ENCODE measurements at regions of chr7 and their contacts with region 1.

Region 1: DNA sequence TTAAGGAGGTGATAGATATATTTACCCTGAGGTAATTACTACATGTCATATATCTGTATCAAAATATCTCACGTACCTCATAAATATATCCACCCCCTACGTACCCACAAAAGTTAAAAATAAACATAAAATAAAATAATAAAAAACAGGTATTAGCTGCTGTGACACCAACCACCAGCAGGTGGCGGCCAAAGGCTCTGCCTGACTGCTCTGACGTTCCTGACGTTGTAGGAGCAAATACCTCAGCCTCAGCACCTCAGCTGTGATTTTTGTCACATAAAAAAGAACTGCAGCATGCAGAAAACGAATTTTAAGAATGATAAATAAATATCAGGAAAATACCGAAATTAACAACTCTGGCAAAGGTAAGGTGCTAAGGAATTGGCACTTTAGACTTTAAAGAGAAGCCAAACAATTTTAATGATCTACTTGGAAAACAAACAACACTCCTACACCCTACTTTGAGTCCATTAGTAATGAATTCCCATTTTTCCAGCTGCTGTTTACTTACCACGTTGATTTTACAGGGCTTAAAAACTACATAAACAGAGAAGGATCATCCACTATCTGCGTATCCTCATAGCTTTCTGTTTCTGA is 125.4 kb upstream of the TARP start:
- DNase-seq: peak; percentile 66
- H3K4me3 Mint-ChIP-seq: no peak overlapping the region
- H3K27ac Mint-ChIP-seq: no peak overlapping the region
- H3K4me1 Mint-ChIP-seq: peaks cover 4% of the 10 kb centered on the region
- H3K27me3 Mint-ChIP-seq: peaks cover 15% of the 10 kb centered on the region

Region 2: GRCh38 chr7:38630720-38631673 is 232.2 kb after region 1 on chr7 and contains the start of gene AMPH:
- CTCF ChIA-PET with region 1: interaction called, 12 read pairs
- DNase-seq: peak; percentile 23
- H3K4me3 Mint-ChIP-seq: peak within 1 kb of the TSS; percentile 43
- H3K27ac Mint-ChIP-seq: no peak within 1 kb of the TSS
- H3K4me1 Mint-ChIP-seq: peaks cover 8% of the 10 kb centered on the region
- H3K27me3 Mint-ChIP-seq: peaks cover 57% of the 10 kb centered on the region

Region 3: GRCh38 chr7:38660427-38661099 is 261.7 kb after region 1 on chr7:
- CTCF ChIA-PET with region 1: interaction called, 31 read pairs
- DNase-seq: peak; percentile 38
- H3K4me3 Mint-ChIP-seq: no peak overlapping the region
- H3K27ac Mint-ChIP-seq: no peak overlapping the region
- H3K4me1 Mint-ChIP-seq: no peaks in the 10 kb centered on the region
- H3K27me3 Mint-ChIP-seq: peaks cover 14% of the 10 kb centered on the region

Measured in activated naive CD4-positive, alpha-beta T cell treated with anti-CD3 and anti-CD28 coated beads, Interleukin-2, amount 10 ng/mL, durations not matched to agents 7 days and 5 days (primary cell).